Naive thymus-derived CD4-positive, alpha-beta T cell (primary cell): ENCODE measurements at regions of chr6 and their contacts with region 1.

Region 1: DNA sequence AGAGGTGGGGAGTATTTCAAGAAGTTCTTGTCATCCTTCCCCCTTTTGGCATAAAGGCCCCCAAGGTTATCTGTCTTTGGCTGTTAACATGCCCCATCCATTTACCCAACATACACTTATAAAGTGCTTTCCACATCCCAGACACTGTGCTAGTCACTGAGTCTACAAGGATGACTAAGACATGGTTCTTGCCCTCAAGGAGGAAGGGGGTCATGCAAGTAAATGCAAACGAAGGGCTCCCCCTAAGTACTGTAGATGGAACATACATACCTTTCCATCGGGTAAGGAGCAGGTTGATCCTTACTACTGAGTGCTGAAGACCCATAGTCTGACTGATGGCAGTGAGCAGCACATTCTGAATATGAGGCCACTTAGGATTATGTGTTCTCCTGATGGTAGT is 38.3 kb downstream of the HECA start:
- DNase-seq: peak in 6 of 9 donors; percentile 31 to 54 (median 40)
- ATAC-seq: peak; percentile 69
- H3K4me3 ChIP-seq: no peak overlapping the region
- H3K4me3 Mint-ChIP-seq: peak overlapping the region; percentile 16 to 75 (median 60)
- H3K27ac ChIP-seq: peak overlapping the region; percentile 49
- H3K27ac Mint-ChIP-seq: peak overlapping the region; percentile 64 to 88 (median 83)
- H3K4me1 ChIP-seq: peaks cover 50 to 85% of the 10 kb centered on the region in 2 donors
- H3K4me1 Mint-ChIP-seq: peaks cover 70 to 95% (median 92%) of the 10 kb centered on the region in 7 donors
- H3K27me3 ChIP-seq: no peaks in the 10 kb centered on the region
- H3K27me3 Mint-ChIP-seq: no peaks in the 10 kb centered on the region

Region 2: GRCh38 chr6:138931660-138932059 is 241.5 kb before region 1 on chr6:
- CTCF ChIA-PET with region 1: no interaction called
- POLR2A ChIA-PET with region 1: no interaction called
- intact Hi-C with region 1: loop called in 1 of 2 experiments (anchors 5 kb)
- DNase-seq: no peak
- ATAC-seq: no peak
- H3K4me3 ChIP-seq: no peak overlapping the region
- H3K4me3 Mint-ChIP-seq: no peak overlapping the region
- H3K27ac ChIP-seq: no peak overlapping the region
- H3K27ac Mint-ChIP-seq: peak overlapping the region in 2 of 9 donors; percentile 3 to 19
- H3K4me1 ChIP-seq: peaks cover 3 to 4% of the 10 kb centered on the region in 2 donors
- H3K4me1 Mint-ChIP-seq: peaks cover 0 to 13% (median 12%) of the 10 kb centered on the region in 7 donors
- H3K27me3 ChIP-seq: no peaks in the 10 kb centered on the region
- H3K27me3 Mint-ChIP-seq: no peaks in the 10 kb centered on the region

Region 3: DNA sequence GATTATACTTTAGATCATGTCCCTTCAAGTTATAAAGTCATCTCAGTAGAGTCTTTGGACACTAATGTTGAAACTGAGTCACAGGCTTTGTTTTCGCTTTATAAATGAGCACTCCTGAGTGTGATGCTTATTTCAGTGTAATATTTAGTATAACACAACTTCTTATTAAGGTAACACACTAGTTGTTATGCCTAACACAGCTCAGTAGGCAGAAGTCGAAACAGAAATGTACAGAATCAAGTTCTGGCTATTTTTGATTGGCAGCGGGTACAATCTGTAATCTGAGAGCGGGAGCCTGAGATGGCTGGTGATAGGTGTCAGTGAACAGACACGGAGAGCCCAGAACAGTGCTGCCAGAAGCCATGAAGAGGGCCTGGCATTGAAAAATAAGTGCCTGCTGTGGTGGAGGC is 26.9 kb before region 1 on chr6:
- CTCF ChIA-PET with region 1: interaction called, 4 read pairs
- POLR2A ChIA-PET with region 1: interaction called, 18 read pairs
- intact Hi-C with region 1: no loop called
- DNase-seq: no peak
- ATAC-seq: peak; percentile 31
- H3K4me3 ChIP-seq: peak overlapping the region; percentile 43
- H3K4me3 Mint-ChIP-seq: peak overlapping the region; percentile 68 to 85 (median 80)
- H3K27ac ChIP-seq: peak overlapping the region; percentile 4
- H3K27ac Mint-ChIP-seq: peak overlapping the region; percentile 37 to 91 (median 73)
- H3K4me1 ChIP-seq: peaks cover 80 to 89% of the 10 kb centered on the region in 2 donors
- H3K4me1 Mint-ChIP-seq: peaks cover 88 to 97% (median 94%) of the 10 kb centered on the region in 7 donors
- H3K27me3 ChIP-seq: no peaks in the 10 kb centered on the region
- H3K27me3 Mint-ChIP-seq: no peaks in the 10 kb centered on the region

Region 4: GRCh38 chr6:139161817-139162284 is 11.3 kb before region 1 on chr6:
- CTCF ChIA-PET with region 1: interaction called, 11 read pairs
- POLR2A ChIA-PET with region 1: interaction called, 29 read pairs
- intact Hi-C with region 1: loop called (anchors 1 kb)
- DNase-seq: peak in 8 of 9 donors; percentile 59 to 78 (median 73)
- ATAC-seq: peak; percentile 64
- H3K4me3 ChIP-seq: peak overlapping the region; percentile 11
- H3K4me3 Mint-ChIP-seq: peak overlapping the region; percentile 79 to 88 (median 83)
- H3K27ac ChIP-seq: peak overlapping the region; percentile 75
- H3K27ac Mint-ChIP-seq: peak overlapping the region; percentile 86 to 98 (median 91)
- H3K4me1 ChIP-seq: peaks cover 81 to 85% of the 10 kb centered on the region in 2 donors
- H3K4me1 Mint-ChIP-seq: peaks cover 70 to 96% (median 86%) of the 10 kb centered on the region in 7 donors
- H3K27me3 ChIP-seq: no peaks in the 10 kb centered on the region
- H3K27me3 Mint-ChIP-seq: no peaks in the 10 kb centered on the region

Region 5: DNA sequence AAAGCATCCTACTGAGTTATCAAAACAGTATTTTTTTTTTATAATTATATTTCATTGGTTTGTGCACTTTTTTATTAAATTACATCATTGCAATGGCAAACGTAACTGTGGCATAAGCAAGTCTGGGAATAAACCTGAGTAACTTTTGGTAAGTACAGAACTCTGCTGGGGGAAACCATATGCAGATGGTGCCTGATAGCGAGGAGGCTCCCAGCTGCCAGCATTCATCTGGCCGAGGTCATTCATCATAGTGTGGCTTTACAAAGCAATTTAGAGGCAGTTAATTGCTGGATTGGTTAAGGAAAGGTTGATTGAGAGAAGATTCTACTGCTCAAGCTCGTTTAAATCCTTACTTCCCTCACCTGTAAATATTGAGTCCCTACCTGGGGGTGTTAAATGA is 14.3 kb after region 1 on chr6:
- CTCF ChIA-PET with region 1: no interaction called
- POLR2A ChIA-PET with region 1: interaction called, 6 read pairs
- intact Hi-C with region 1: loop called in 1 of 2 experiments (anchors 2 kb)
- DNase-seq: no peak
- ATAC-seq: no peak
- H3K4me3 ChIP-seq: no peak overlapping the region
- H3K4me3 Mint-ChIP-seq: no peak overlapping the region
- H3K27ac ChIP-seq: no peak overlapping the region
- H3K27ac Mint-ChIP-seq: peak overlapping the region in 4 of 9 donors; percentile 18 to 90 (median 41)
- H3K4me1 ChIP-seq: peaks cover 0 to 14% of the 10 kb centered on the region in 2 donors
- H3K4me1 Mint-ChIP-seq: peaks cover 8 to 57% (median 38%) of the 10 kb centered on the region in 7 donors
- H3K27me3 ChIP-seq: no peaks in the 10 kb centered on the region
- H3K27me3 Mint-ChIP-seq: no peaks in the 10 kb centered on the region